B cell (primary cell): ENCODE measurements at regions of chr11 and their contacts with region 1.

Region 1: GRCh38 chr11:128630367-128631230 is 43.2 kb upstream of the ETS1 start:
- DNase-seq: peak; percentile 96
- ATAC-seq: peak; percentile 87
- H3K4me3 ChIP-seq: peak overlapping the region in 2 of 5 experiments; percentile 3 to 11
- H3K4me3 Mint-ChIP-seq: peak overlapping the region; percentile 65
- H3K27ac ChIP-seq: peak overlapping the region; percentile 43 to 90
- H3K27ac Mint-ChIP-seq: peak overlapping the region; percentile 93
- H3K4me1 ChIP-seq: peaks cover 66 to 68% of the 10 kb centered on the region in 2 donors
- H3K4me1 Mint-ChIP-seq: peaks cover 66% of the 10 kb centered on the region
- H3K27me3 ChIP-seq: no peaks in the 10 kb centered on the region
- H3K27me3 Mint-ChIP-seq: no peaks in the 10 kb centered on the region
- CTCF ChIP-seq: peak; percentile 86

Region 2: DNA sequence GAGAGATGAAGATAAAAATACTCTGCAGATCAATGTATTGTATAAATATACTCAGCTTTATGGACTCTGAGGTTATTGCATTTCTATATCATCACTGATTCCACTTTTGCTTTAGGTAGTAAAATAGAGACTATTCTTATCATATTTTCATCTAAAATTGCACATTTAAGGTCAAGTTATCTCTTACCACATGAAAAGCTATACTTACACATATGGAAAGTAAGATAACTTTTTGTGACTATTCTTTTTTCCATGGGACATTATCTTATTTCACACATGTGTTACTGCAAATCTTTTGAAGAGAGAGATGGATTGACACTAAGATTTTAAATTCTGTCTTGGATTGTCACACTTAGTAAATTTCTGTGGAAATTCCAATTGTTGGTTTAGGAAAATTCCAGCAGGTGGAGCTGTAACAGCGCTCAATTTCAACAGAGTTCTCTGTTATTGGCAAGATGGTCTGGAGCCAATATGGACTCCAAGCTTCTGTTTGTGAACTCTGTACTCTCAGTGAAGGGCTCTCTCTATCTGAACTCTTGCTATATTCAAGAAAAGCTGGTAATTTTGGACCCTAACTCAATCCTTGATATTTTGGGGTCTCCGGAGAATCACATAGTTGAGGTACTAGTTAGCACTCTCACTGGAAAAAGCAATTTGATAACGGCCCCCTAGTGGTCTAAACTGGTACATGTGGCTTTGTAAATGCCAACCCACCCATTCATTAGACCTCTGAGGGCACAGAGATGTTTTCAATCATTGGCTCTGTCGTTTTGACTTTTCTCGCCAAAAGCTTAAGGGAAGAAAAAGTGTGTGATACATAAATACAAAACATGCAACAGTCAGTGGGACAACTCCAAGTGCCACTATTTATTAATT is 472.9 kb before region 1 on chr11:
- CTCF ChIA-PET with region 1: interaction called, 46 read pairs
- POLR2A ChIA-PET with region 1: no interaction called
- intact Hi-C with region 1: loop called (anchors 1 kb)
- DNase-seq: peak; percentile 82
- ATAC-seq: peak; percentile 91
- H3K4me3 ChIP-seq: peak overlapping the region in 3 of 5 experiments; percentile 22 to 37 (median 23)
- H3K4me3 Mint-ChIP-seq: peak overlapping the region; percentile 81
- H3K27ac ChIP-seq: no peak overlapping the region
- H3K27ac Mint-ChIP-seq: no peak overlapping the region
- H3K4me1 ChIP-seq: peaks cover 0 to 3% of the 10 kb centered on the region in 2 donors
- H3K4me1 Mint-ChIP-seq: peaks cover 2% of the 10 kb centered on the region
- H3K27me3 ChIP-seq: peaks cover 0 to 7% (median 0%) of the 10 kb centered on the region in 4 experiments
- H3K27me3 Mint-ChIP-seq: peaks cover 15% of the 10 kb centered on the region
- CTCF ChIP-seq: peak; percentile 99

Region 3: GRCh38 chr11:128302425-128303186 is 328.0 kb before region 1 on chr11:
- CTCF ChIA-PET with region 1: interaction called, 14 read pairs
- POLR2A ChIA-PET with region 1: no interaction called
- intact Hi-C with region 1: no loop called
- DNase-seq: peak; percentile 82
- ATAC-seq: peak; percentile 90
- H3K4me3 ChIP-seq: no peak overlapping the region
- H3K4me3 Mint-ChIP-seq: peak overlapping the region; percentile 44
- H3K27ac ChIP-seq: peak overlapping the region; percentile 67 to 85
- H3K27ac Mint-ChIP-seq: peak overlapping the region; percentile 88
- H3K4me1 ChIP-seq: peaks cover 75 to 76% of the 10 kb centered on the region in 2 donors
- H3K4me1 Mint-ChIP-seq: peaks cover 77% of the 10 kb centered on the region
- H3K27me3 ChIP-seq: no peaks in the 10 kb centered on the region
- H3K27me3 Mint-ChIP-seq: no peaks in the 10 kb centered on the region
- CTCF ChIP-seq: no peak

Region 4: GRCh38 chr11:128497061-128497775 is 133.4 kb before region 1 on chr11:
- CTCF ChIA-PET with region 1: interaction called, 9 read pairs
- POLR2A ChIA-PET with region 1: no interaction called
- intact Hi-C with region 1: loop called (anchors 1 kb)
- DNase-seq: peak; percentile 60
- ATAC-seq: peak; percentile 77
- H3K4me3 ChIP-seq: peak overlapping the region in 1 of 5 experiments; percentile 11
- H3K4me3 Mint-ChIP-seq: peak overlapping the region; percentile 51
- H3K27ac ChIP-seq: peak overlapping the region; percentile 8 to 82
- H3K27ac Mint-ChIP-seq: peak overlapping the region; percentile 81
- H3K4me1 ChIP-seq: peaks cover 96 to 98% of the 10 kb centered on the region in 2 donors
- H3K4me1 Mint-ChIP-seq: peaks cover 96% of the 10 kb centered on the region
- H3K27me3 ChIP-seq: no peaks in the 10 kb centered on the region
- H3K27me3 Mint-ChIP-seq: no peaks in the 10 kb centered on the region
- CTCF ChIP-seq: no peak

Region 5: DNA sequence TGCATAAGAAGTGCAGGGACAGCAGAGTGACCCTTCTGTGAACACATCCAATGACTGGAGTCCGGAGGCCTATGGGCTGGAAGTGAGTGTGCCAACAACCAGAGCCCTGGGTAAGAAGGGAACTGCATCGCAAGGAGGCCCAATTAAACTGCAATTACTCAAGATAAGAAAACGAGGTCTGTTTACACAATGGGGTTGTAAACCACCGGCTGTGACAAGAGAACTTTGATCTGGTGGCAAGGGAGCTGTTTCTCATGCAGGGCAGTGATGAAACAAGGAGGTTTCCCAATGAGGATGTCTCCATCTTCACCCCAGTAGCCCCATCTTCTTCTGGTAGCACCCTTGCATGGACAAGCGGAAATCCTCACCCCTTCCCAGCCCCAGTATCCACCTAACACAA is 64.7 kb before region 1 on chr11:
- CTCF ChIA-PET with region 1: interaction called, 19 read pairs
- POLR2A ChIA-PET with region 1: interaction called, 7 read pairs
- intact Hi-C with region 1: no loop called
- DNase-seq: no peak
- ATAC-seq: no peak
- H3K4me3 ChIP-seq: no peak overlapping the region
- H3K4me3 Mint-ChIP-seq: no peak overlapping the region
- H3K27ac ChIP-seq: peak overlapping the region in 1 of 2 donors; percentile 33
- H3K27ac Mint-ChIP-seq: peak overlapping the region; percentile 65
- H3K4me1 ChIP-seq: peaks cover 50 to 57% of the 10 kb centered on the region in 2 donors
- H3K4me1 Mint-ChIP-seq: peaks cover 67% of the 10 kb centered on the region
- H3K27me3 ChIP-seq: no peaks in the 10 kb centered on the region
- H3K27me3 Mint-ChIP-seq: no peaks in the 10 kb centered on the region
- CTCF ChIP-seq: no peak

Region 6: GRCh38 chr11:128733440-128734102 is 103.0 kb after region 1 on chr11:
- CTCF ChIA-PET with region 1: interaction called, 28 read pairs
- POLR2A ChIA-PET with region 1: no interaction called
- intact Hi-C with region 1: no loop called
- DNase-seq: peak; percentile 34
- ATAC-seq: peak; percentile 22
- H3K4me3 ChIP-seq: peak overlapping the region in 4 of 5 experiments; percentile 3 to 41 (median 14)
- H3K4me3 Mint-ChIP-seq: peak overlapping the region; percentile 82
- H3K27ac ChIP-seq: peak overlapping the region; percentile 66 to 80
- H3K27ac Mint-ChIP-seq: peak overlapping the region; percentile 96
- H3K4me1 ChIP-seq: peaks cover 99% of the 10 kb centered on the region in 2 donors
- H3K4me1 Mint-ChIP-seq: peaks cover 94% of the 10 kb centered on the region
- H3K27me3 ChIP-seq: no peaks in the 10 kb centered on the region
- H3K27me3 Mint-ChIP-seq: no peaks in the 10 kb centered on the region
- CTCF ChIP-seq: no peak

Region 7: DNA sequence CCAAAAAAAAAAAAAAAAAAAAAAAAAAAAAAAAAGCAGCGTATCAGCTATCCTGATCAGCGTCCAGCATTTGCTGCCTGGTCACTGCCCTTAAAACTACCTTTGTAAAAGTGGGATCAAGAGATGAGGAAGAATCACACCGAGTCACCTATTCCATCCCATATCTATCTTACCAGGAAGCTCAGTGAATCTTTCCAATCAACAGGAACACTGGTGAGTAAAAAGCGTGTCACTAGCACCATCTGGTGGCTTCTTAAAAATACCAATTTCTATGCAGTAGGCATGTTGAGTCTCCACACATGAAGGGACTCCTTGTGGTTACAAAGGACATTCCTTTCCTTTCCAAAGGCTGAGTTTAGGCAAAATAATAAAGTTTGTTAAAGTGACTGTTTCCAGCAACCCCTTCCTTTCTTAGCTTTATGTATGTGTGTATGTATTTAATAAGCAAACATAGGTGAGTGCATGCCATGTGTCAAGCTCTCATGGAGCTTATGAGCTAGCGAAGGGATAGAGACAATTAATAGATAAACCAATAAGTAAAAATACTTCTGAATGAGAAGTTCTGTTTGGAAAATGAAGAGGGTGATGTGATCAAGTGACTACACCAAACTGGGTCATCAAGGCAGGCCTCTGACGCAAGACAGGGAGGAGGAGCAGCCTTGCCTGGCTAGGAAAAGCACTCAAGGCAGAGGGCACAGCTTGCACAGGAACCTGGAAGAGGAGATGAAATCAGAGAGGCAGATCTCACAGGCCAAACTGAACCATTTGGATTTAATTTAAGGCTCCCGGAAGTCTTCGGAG is 326.0 kb after region 1 on chr11:
- CTCF ChIA-PET with region 1: interaction called, 29 read pairs
- POLR2A ChIA-PET with region 1: no interaction called
- intact Hi-C with region 1: loop called (anchors 10 kb)
- DNase-seq: peak; percentile 73
- ATAC-seq: no peak
- H3K4me3 ChIP-seq: no peak overlapping the region
- H3K4me3 Mint-ChIP-seq: no peak overlapping the region
- H3K27ac ChIP-seq: no peak overlapping the region
- H3K27ac Mint-ChIP-seq: no peak overlapping the region
- H3K4me1 ChIP-seq: peaks cover 0 to 4% of the 10 kb centered on the region in 2 donors
- H3K4me1 Mint-ChIP-seq: peaks cover 2% of the 10 kb centered on the region
- H3K27me3 ChIP-seq: peaks cover 0 to 13% (median 1%) of the 10 kb centered on the region in 4 experiments
- H3K27me3 Mint-ChIP-seq: peaks cover 30% of the 10 kb centered on the region
- CTCF ChIP-seq: peak; percentile 86